ENCODE measurements at regions of chr11 and their contacts with region 1.

Region 1: GRCh38 chr11:126790550-126791081 is 210.0 kb downstream of the KIRREL3 start:
- DNase-seq: peak; percentile 98
- ATAC-seq: peak; percentile 97
- H3K4me3 ChIP-seq: no peak overlapping the region
- H3K27ac ChIP-seq: 0 out of 2 replicates have a peak overlapping the region, but pooled peaks have one; percentile 41
- H3K4me1 ChIP-seq: peaks cover 5% of the 10 kb centered on the region
- H3K27me3 ChIP-seq: no peaks in the 10 kb centered on the region
- CTCF ChIP-seq: peak; percentile 59
- POLR2A ChIP-seq: no peak
- RAD21 ChIP-seq: peak; percentile 72

Region 2: DNA sequence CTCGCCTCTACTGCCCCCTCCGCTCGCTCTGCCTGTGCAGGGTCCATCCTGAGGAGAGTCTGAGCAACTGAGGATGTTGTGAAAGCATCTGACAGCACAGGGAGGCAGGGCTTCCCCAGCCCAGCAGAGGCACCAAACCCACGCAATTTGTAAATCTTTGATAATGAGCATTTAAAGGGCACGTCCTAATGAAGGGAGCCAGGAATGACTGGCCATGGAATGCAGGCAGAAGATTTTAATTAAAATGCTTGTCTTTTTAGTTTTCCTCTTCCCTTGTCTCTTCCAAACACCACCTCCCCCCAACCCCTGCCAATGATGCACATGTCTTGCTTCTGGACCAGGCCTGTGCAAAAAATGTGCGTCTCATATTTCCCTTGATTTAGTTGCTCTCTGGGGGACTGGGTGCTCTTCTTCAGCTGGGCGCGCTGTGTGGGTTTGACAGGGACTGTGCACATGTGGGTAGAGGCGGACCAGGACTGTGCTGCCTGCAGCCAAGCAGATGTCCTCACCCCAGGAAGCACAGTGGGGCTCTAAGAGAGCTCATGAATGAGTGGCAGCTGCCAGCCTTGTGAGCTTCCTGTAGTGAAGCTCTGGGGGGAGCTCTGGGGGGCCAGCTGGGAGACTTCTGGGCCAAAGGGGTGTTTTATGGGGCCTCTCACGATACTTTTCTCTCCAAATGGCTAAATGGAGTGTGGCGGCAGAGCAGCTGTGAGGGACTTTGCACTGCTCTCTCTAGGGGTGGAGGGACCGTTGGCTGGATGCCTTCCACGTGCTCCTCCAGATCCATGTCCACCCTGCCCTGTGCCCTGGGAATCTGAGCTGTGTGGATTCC is 161.6 kb before region 1 on chr11:
- CTCF ChIA-PET with region 1: no interaction called
- POLR2A ChIA-PET with region 1: no interaction called
- dilution Hi-C with region 1: no loop called
- in situ Hi-C with region 1: no loop called
- intact Hi-C with region 1: loop called (anchors 10 kb)
- DNase-seq: peak; percentile 55
- ATAC-seq: peak; percentile 87
- H3K4me3 ChIP-seq: no peak overlapping the region
- H3K27ac ChIP-seq: no peak overlapping the region
- H3K4me1 ChIP-seq: peaks cover 3% of the 10 kb centered on the region; the same call in 1 of the 2 replicates
- H3K27me3 ChIP-seq: no peaks in the 10 kb centered on the region
- CTCF ChIP-seq: 0 out of 2 replicates have a peak, but pooled peaks have one; percentile 26
- POLR2A ChIP-seq: no peak
- RAD21 ChIP-seq: 0 out of 2 replicates have a peak, but pooled peaks have one; percentile 20

Region 3: GRCh38 chr11:126647735-126648134 is 142.9 kb before region 1 on chr11:
- CTCF ChIA-PET with region 1: no interaction called
- POLR2A ChIA-PET with region 1: no interaction called
- dilution Hi-C with region 1: no loop called
- in situ Hi-C with region 1: no loop called
- intact Hi-C with region 1: no loop called
- DNase-seq: peak; percentile 87
- ATAC-seq: peak; percentile 97
- H3K4me3 ChIP-seq: no peak overlapping the region
- H3K27ac ChIP-seq: peak overlapping the region; percentile 64
- H3K4me1 ChIP-seq: peaks cover 4% of the 10 kb centered on the region; the same call in 1 of the 2 replicates
- H3K27me3 ChIP-seq: no peaks in the 10 kb centered on the region
- CTCF ChIP-seq: no peak
- POLR2A ChIP-seq: no peak
- RAD21 ChIP-seq: no peak

Region 4: DNA sequence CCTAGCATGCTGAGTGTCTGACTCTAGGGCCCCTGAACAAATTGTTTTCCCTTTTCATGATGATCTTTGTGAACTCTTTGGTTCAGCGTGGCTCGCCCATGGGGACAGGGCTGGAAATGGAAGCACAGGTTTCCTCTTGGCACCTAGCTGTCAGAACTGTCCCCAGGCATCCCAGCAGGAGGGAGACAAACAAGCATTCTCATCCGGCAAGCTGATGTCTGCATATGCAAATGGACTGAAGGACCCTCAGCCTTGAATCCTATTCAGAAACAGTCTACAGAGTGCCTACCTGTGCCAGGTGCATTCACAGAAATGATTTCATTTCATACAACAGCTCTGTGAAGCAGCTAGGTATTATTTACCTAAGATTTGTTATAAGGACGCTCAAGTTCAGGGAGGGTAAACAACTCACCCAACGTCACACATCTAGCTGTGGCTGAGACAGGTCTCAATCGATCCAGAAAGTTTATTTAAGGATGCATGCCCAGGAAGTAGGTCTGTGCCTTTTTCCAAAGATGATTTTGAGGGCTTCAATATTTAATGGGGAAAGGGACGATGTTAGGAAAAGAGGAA is 33.5 kb after region 1 on chr11:
- CTCF ChIA-PET with region 1: no interaction called
- POLR2A ChIA-PET with region 1: no interaction called
- dilution Hi-C with region 1: no loop called
- in situ Hi-C with region 1: no loop called
- intact Hi-C with region 1: no loop called
- DNase-seq: no peak
- ATAC-seq: no peak
- H3K4me3 ChIP-seq: no peak overlapping the region
- H3K27ac ChIP-seq: no peak overlapping the region
- H3K4me1 ChIP-seq: no peaks in the 10 kb centered on the region
- H3K27me3 ChIP-seq: no peaks in the 10 kb centered on the region
- CTCF ChIP-seq: no peak
- POLR2A ChIP-seq: no peak
- RAD21 ChIP-seq: no peak

Region 5: GRCh38 chr11:126969865-126970479 is 179.4 kb after region 1 on chr11:
- CTCF ChIA-PET with region 1: interaction called, 8 read pairs
- POLR2A ChIA-PET with region 1: no interaction called
- dilution Hi-C with region 1: no loop called
- in situ Hi-C with region 1: no loop called
- intact Hi-C with region 1: loop called (anchors 5 kb)
- DNase-seq: peak; percentile 83
- ATAC-seq: peak; percentile 99
- H3K4me3 ChIP-seq: no peak overlapping the region
- H3K27ac ChIP-seq: no peak overlapping the region
- H3K4me1 ChIP-seq: no peaks in the 10 kb centered on the region
- H3K27me3 ChIP-seq: no peaks in the 10 kb centered on the region
- CTCF ChIP-seq: peak; percentile 93
- POLR2A ChIP-seq: peak; percentile 56
- RAD21 ChIP-seq: peak; percentile 94